ENCODE measurements at regions of chr2 and their contacts with region 1.

Region 1: GRCh38 chr2:130342533-130343275 is at the start of gene IMP4:
- DNase-seq: peak; percentile 89 to 94
- H3K4me3 ChIP-seq: peak within 1 kb of the TSS; percentile 77 to 93 (median 84)
- H3K27ac ChIP-seq: peak within 1 kb of the TSS; percentile 84
- H3K4me1 ChIP-seq: peaks cover 0 to 3% (median under 1%) of the 10 kb centered on the region in 4 experiments; a peak in 3 of 7 replicates
- H3K27me3 ChIP-seq: no peaks in the 10 kb centered on the region
- CTCF ChIP-seq: peak; percentile 13 to 32 (median 29)
- EP300 ChIP-seq: no peak
- POLR2A ChIP-seq: peak; percentile 7 to 61; a peak in 1 of 3 replicates
- RAD21 ChIP-seq: peak; percentile 16 to 37; a peak in 2 of 4 replicates
- total RNA-seq, gene IMP4: 93.7 and 96.8 TPM in 2 replicates

Region 2: DNA sequence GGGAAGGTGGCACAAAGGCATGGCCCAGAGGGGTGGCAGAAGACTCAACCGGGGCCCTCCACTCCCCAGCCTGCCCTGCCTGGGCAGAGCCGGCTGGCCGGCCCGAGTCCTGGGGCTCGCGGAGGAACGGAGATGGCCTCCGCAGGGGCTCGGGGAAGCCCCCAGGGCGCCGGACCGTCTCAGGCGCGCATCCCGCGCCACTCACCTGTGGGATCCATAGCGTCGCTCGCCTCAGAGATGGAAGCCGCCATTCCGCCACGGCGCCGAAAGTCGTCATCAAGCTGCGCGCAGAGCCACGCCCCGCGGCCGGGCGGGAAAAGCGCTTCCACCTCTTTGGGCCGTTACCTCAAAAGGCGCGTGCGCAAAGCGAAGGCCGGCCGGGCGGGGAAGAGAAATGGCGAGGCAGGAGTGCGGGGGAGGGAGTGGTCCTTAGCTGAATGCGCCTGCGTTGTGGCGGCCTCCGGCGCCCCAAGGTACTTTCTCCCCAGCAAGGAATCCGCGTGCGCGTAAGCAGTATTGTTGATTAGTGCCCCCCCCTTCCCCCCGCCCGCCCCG is 161.3 kb before region 1 on chr2 and contains the start of gene SMPD4:
- CTCF ChIA-PET with region 1: interaction called, 3 read pairs
- POLR2A ChIA-PET with region 1: interaction called, 23 read pairs
- DNase-seq: peak; percentile 70 to 99
- H3K4me3 ChIP-seq: peak within 1 kb of the TSS; percentile 88 to 99 (median 98)
- H3K27ac ChIP-seq: peak within 1 kb of the TSS; percentile 96
- H3K4me1 ChIP-seq: peaks cover 0 to 7% (median 3%) of the 10 kb centered on the region in 4 experiments; a peak in 4 of 7 replicates
- H3K27me3 ChIP-seq: no peaks in the 10 kb centered on the region
- CTCF ChIP-seq: no peak
- EP300 ChIP-seq: no peak
- POLR2A ChIP-seq: peak; percentile 67 to 92
- RAD21 ChIP-seq: no peak
- total RNA-seq, gene SMPD4: 96.3 and 102 TPM in 2 replicates

Region 3: GRCh38 chr2:130355578-130356431 is 13.1 kb after region 1 on chr2 and contains the start of gene PTPN18:
- CTCF ChIA-PET with region 1: interaction called, 28 read pairs
- POLR2A ChIA-PET with region 1: interaction called, 72 read pairs
- DNase-seq: peak in 1 of 2 experiments; percentile 77
- H3K4me3 ChIP-seq: peak within 1 kb of the TSS; percentile 41 to 65 (median 60)
- H3K27ac ChIP-seq: no peak within 1 kb of the TSS
- H3K4me1 ChIP-seq: no peaks in the 10 kb centered on the region
- H3K27me3 ChIP-seq: peaks cover 15 to 40% (median 26%) of the 10 kb centered on the region in 4 experiments; a peak in 6 of 7 replicates
- CTCF ChIP-seq: peak; percentile 29 to 47 (median 30)
- EP300 ChIP-seq: no peak
- POLR2A ChIP-seq: peak in 1 of 2 experiments; percentile 36; a peak in 1 of 3 replicates
- RAD21 ChIP-seq: peak in 1 of 2 experiments; percentile 47; a peak in 2 of 4 replicates
- total RNA-seq, gene PTPN18: 13.1 and 14.7 TPM in 2 replicates

Measured in H1 (cell line).